Psoas muscle (tissue), 8 donors: ENCODE measurements at regions of chr18 and their contacts with region 1.

Region 1: GRCh38 chr18:35085450-35086380 is 44.5 kb downstream of the MAPRE2 start:
- DNase-seq: no peak
- ATAC-seq: peak; percentile 83 to 88 (median 84)
- H3K4me3 ChIP-seq: no peak overlapping the region
- H3K27ac ChIP-seq: peak overlapping the region; percentile 83
- H3K4me1 ChIP-seq: peaks cover 72% of the 10 kb centered on the region
- H3K27me3 ChIP-seq: no peaks in the 10 kb centered on the region
- CTCF ChIP-seq: no peak

Region 2: DNA sequence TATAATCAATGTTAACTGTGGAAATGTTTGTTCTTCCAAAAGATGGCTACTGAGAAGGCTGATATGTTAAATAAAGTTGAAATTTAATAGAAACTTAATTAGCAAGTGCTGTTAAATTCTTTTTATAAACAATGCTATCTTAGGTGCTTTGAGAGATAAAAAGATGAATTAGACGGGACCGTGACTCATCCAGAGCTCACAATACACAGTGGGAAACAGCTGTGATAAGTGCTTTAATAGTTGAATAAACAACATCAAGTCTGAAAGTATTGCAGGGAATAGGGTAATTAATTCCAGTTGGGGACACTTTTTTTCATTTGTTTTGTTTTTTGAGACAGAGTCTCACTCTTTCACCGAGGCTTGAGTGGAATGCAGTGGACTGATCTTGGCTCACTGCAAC is 461.2 kb before region 1 on chr18:
- intact Hi-C with region 1: no loop called
- DNase-seq: no peak
- ATAC-seq: no peak
- H3K4me3 ChIP-seq: no peak overlapping the region
- H3K27ac ChIP-seq: peak overlapping the region; percentile 3
- H3K4me1 ChIP-seq: peaks cover 27% of the 10 kb centered on the region
- H3K27me3 ChIP-seq: no peaks in the 10 kb centered on the region
- CTCF ChIP-seq: no peak

Region 3: GRCh38 chr18:35040988-35041814 is 44.5 kb before region 1 on chr18 and contains the start of gene MAPRE2:
- intact Hi-C with region 1: loop called in 1 of 2 experiments (anchors 5 kb)
- DNase-seq: peak; percentile 99 to 100
- ATAC-seq: peak; percentile 95 to 98 (median 96)
- H3K4me3 ChIP-seq: peak within 1 kb of the TSS; percentile 83
- H3K27ac ChIP-seq: peak within 1 kb of the TSS; percentile 84
- H3K4me1 ChIP-seq: peaks cover 80% of the 10 kb centered on the region
- H3K27me3 ChIP-seq: no peaks in the 10 kb centered on the region
- CTCF ChIP-seq: no peak
- total RNA-seq, gene MAPRE2: 48.0 to 83.4 (median 72.5) TPM

Region 4: GRCh38 chr18:35122586-35123224 is 37.0 kb after region 1 on chr18:
- intact Hi-C with region 1: loop called in 1 of 2 experiments (anchors 5 kb)
- DNase-seq: peak; percentile 60 to 77
- ATAC-seq: peak; percentile 65 to 82 (median 81)
- H3K4me3 ChIP-seq: no peak overlapping the region
- H3K27ac ChIP-seq: peak overlapping the region; percentile 48
- H3K4me1 ChIP-seq: peaks cover 62% of the 10 kb centered on the region
- H3K27me3 ChIP-seq: no peaks in the 10 kb centered on the region
- CTCF ChIP-seq: peak; percentile 37

Region 5: DNA sequence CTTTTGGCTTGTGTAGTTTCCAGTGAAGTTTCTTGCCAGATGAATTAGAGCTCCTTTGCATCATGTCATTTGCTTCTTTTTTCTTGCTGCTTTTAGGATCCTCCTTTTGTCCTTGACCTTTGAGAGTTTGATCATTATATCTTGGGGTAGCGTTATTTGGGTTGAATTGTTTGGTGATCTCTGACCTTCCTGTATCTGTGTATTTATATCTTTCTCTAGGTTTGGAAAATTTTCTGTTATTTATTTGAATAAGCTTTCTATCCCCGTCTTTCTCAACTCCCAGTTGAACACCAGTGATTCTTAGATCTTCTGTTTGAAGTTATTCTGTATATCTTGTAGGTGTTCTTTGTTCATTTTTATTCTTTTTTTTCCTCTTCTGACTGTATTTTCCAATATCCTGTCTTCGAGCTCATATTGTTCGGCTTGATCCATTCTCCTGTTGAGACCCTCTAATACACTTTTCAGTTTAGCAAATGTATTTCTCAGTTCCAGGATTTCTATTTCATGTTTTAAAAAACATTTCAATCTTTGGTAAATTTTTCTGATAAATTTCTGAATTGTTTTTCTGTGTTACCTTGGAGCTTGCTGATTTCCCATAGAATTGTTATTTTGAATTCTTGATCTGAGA is 516.6 kb after region 1 on chr18:
- intact Hi-C with region 1: no loop called
- DNase-seq: no peak
- ATAC-seq: no peak
- H3K4me3 ChIP-seq: no peak overlapping the region
- H3K27ac ChIP-seq: no peak overlapping the region
- H3K4me1 ChIP-seq: peaks cover 9% of the 10 kb centered on the region
- H3K27me3 ChIP-seq: no peaks in the 10 kb centered on the region
- CTCF ChIP-seq: no peak